ENCODE measurements at regions of chr6 and their contacts with region 1.

Region 1: GRCh38 chr6:1893470-1894130 is 283.9 kb downstream of the FOXC1 start:
- DNase-seq: no peak
- H3K4me3 ChIP-seq: no peak overlapping the region
- H3K27ac ChIP-seq: no peak overlapping the region
- H3K4me1 ChIP-seq: peaks cover 16% of the 10 kb centered on the region
- H3K27me3 ChIP-seq: no peaks in the 10 kb centered on the region
- CTCF ChIP-seq: no peak

Region 2: DNA sequence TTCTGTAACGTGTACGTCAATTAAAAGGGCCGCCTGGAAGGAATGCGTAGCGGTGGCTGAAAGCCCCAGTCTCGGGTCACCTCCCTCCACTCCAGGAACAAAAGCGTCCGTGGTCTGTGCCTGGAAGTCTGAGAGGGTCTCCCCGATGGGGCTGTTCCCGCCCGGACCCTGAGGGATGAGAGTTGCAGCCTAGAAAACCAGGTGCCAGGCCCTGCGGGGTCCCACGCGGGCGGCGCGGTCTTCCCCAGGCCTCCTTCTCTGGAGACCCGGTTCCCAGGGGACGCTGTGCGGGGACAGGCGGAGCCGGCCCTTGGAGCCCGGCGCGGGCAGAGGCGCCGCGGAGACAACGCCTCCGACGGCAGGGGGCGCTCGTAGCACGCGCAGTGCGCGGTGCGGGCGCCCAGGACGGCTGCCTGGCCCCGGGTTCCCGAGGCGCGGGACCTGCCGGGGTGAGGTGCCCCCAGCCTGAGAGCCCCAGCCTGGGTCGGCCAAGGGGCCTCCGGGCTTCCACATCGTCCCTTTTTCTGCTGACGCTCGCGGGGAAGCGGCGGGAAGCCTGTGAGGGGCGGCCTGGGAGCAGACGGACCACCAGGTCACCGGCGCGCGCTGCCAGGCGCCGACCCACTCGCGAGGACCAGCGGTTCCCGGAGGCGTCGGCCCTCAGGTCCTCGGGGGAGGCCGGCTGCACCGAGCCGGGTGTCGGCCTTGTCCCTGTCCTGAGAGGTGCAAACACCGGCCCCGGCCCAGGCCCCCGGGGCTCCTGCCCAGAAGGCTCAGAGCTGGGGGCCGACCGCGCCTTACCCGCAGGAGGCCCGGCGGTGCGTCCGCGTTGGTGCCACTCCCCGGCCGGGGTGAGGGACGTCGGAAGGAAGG is 289.2 kb before region 1 on chr6:
- CTCF ChIA-PET with region 1: no interaction called
- POLR2A ChIA-PET with region 1: no interaction called
- intact Hi-C with region 1: no loop called
- DNase-seq: peak in 1 of 2 experiments; percentile 67
- H3K4me3 ChIP-seq: peak overlapping the region; percentile 53; the same call in 1 of the 2 replicates
- H3K27ac ChIP-seq: no peak overlapping the region
- H3K4me1 ChIP-seq: no peaks in the 10 kb centered on the region; the same call in 1 of the 2 replicates
- H3K27me3 ChIP-seq: no peaks in the 10 kb centered on the region
- CTCF ChIP-seq: peak; percentile 74

Region 3: DNA sequence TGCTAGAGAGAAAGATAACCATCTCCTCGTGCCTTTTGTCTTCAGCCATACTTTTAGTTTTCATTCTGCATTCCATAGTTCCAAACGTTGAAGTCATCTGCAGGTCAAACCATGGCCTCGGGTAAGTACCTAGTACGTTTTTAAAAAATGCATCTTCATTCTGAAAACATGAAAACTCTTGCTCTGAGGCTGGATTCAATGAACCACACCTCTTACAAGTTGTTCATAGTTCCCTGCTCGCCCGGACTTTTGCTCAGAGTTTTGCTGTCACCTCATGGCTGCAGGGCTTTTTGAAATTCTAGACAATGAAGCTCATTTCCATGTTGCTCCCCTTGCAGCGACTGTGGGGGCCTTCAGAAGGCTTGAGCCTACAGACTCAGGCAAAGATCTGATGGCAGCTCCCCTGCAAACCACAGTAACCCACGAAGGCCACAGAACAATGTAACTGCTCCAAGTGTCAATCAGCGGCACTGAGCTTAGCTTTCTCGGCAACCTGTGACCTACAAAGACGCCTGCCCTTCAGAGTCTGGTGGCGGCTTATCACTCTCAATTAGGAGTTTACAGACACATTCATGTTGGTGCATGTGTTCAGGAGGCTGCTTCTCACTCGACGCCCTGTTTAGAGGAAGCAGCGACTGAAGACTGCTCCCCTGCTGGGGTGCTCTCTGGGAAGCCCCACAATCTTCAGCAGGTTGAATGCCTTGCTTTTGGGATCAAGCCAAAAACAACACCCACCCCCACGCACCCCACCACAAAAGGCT is 222.7 kb before region 1 on chr6:
- CTCF ChIA-PET with region 1: no interaction called
- POLR2A ChIA-PET with region 1: interaction called, 10 read pairs
- intact Hi-C with region 1: no loop called
- DNase-seq: peak; percentile 69 to 88
- H3K4me3 ChIP-seq: no peak overlapping the region
- H3K27ac ChIP-seq: peak overlapping the region; percentile 73
- H3K4me1 ChIP-seq: peaks cover 16% of the 10 kb centered on the region
- H3K27me3 ChIP-seq: no peaks in the 10 kb centered on the region
- CTCF ChIP-seq: no peak